HepG2 (cell line): ENCODE measurements at regions of chr4 and their contacts with region 1.

Region 1: DNA sequence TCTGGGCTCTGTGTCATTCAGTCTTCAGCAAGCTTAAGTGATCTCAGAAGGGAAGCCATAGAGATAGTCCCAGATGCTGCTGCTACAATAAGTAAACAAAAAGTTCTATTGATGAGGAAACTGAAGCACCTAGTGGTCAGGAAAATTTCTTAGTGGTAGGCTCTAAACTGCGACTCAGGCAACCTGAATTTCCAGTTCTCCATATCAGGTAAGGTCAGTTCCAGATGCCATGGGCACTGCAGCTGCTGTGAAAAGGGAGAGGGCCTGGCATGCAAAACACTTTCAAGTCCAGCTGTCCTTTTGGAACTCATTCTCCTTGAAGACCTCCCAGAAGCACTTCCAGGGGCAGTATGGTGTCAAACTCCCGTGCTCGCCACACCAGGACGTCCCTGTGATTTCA is 46.2 kb downstream of the REELD1 start:
- DNase-seq: no peak
- ATAC-seq: no peak
- H3K4me3 ChIP-seq: no peak overlapping the region
- H3K27ac ChIP-seq: no peak overlapping the region
- H3K4me1 ChIP-seq: no peaks in the 10 kb centered on the region
- H3K27me3 ChIP-seq: no peaks in the 10 kb centered on the region
- CTCF ChIP-seq: no peak
- EP300 ChIP-seq: no peak
- POLR2A ChIP-seq: no peak
- RAD21 ChIP-seq: no peak

Region 2: GRCh38 chr4:146175541-146176453 is 84.7 kb before region 1 on chr4 and contains the start of gene LSM6:
- CTCF ChIA-PET with region 1: no interaction called
- POLR2A ChIA-PET with region 1: no interaction called
- in situ Hi-C with region 1: no loop called
- intact Hi-C with region 1: no loop called
- DNase-seq: peak; percentile 77
- ATAC-seq: peak; percentile 97
- H3K4me3 ChIP-seq: peak within 1 kb of the TSS; percentile 79 to 91 (median 83)
- H3K27ac ChIP-seq: peak within 1 kb of the TSS; percentile 87
- H3K4me1 ChIP-seq: peaks cover 28% of the 10 kb centered on the region
- H3K27me3 ChIP-seq: peaks cover 0 to 4% of the 10 kb centered on the region in 2 experiments; a peak in 2 of 5 replicates
- CTCF ChIP-seq: peak; percentile 41
- EP300 ChIP-seq: no peak
- POLR2A ChIP-seq: peak; percentile 73
- RAD21 ChIP-seq: peak; percentile 63
- total RNA-seq, gene LSM6: 83.3 and 83.8 TPM in 2 replicates

Region 3: GRCh38 chr4:146291313-146291712 is 30.8 kb after region 1 on chr4:
- CTCF ChIA-PET with region 1: no interaction called
- POLR2A ChIA-PET with region 1: no interaction called
- in situ Hi-C with region 1: no loop called
- intact Hi-C with region 1: loop called (anchors 2 kb)
- DNase-seq: no peak
- ATAC-seq: 0 out of 3 replicates have a peak, but pooled peaks have one; percentile 33
- H3K4me3 ChIP-seq: no peak overlapping the region
- H3K27ac ChIP-seq: no peak overlapping the region
- H3K4me1 ChIP-seq: no peaks in the 10 kb centered on the region
- H3K27me3 ChIP-seq: no peaks in the 10 kb centered on the region
- CTCF ChIP-seq: no peak
- EP300 ChIP-seq: no peak
- POLR2A ChIP-seq: no peak
- RAD21 ChIP-seq: no peak